ENCODE measurements at regions of chr19 and their contacts with region 1.

Region 1: DNA sequence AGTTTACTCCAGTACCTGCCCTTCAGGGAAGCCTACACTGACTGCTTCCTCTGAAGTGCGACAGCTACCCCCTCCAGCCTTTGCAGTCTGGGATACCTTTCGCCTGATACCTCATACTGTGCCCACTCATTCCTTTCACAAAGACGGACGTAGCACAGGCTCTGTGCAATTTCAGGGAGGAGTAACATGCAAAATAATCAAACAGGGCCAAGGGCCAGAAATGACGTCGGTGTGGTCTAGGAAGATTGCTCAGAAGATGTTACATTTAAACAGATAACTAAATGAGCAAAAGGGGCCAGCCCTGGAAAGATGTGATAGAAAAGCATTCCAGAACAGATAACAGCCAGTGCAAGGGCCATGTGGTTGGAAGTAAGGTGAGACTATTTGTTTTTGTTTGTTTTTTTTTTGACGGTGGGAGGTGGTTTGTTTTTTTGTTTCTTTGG is 6.6 kb upstream of the DDX39A start:
- DNase-seq: peak; percentile 91
- H3K4me3 ChIP-seq: no peak overlapping the region
- H3K27ac ChIP-seq: peak overlapping the region; percentile 48 to 65
- H3K4me1 ChIP-seq: peaks cover 3% of the 10 kb centered on the region
- H3K27me3 ChIP-seq: no peaks in the 10 kb centered on the region
- CTCF ChIP-seq: no peak
- POLR2A ChIP-seq: no peak

Region 2: DNA sequence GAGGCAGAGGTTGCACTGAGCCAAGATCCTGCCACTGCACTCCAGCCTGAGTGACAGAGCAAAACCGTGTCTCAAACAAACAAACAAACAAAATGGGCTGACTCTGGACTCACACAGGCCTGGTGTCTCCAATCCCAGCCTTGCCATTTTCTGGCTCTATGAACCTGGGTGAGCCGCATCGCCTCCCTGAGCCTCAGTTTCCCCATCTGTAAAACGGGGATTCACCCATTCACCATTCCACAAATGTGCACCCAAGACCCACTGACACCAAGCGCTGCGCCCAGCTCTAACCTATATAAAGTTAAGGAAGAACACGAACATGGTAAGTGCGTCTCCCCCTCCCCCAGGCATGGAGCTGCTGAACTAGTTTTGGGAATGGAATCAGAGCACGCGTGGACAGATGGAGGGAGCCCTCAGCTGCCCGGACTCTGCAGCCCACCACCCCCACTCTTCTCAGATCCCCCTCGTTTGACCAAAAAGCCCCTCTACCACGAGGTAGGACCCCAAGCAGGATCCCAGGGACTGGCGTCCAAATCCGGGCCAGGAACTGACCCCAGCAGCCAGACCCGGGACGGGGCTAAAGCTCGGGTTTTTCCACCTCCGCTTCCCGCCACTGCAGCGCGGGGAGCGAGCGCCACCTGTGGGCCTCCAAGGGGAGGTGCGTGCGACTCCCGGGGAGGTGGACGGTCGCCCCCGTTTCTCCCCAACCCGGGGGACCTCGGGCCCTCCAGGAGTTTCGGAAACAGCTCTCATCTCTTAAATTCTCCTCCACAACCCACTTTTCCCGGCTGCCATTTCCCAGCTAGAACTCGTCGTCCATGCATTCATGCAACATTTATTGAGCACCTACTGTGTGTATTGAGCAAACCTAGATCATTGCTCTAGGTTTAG is 77.5 kb before region 1 on chr19:
- intact Hi-C with region 1: no loop called
- DNase-seq: peak; percentile 69
- H3K4me3 ChIP-seq: peak overlapping the region; percentile 22 to 38
- H3K27ac ChIP-seq: no peak overlapping the region
- H3K4me1 ChIP-seq: no peaks in the 10 kb centered on the region
- H3K27me3 ChIP-seq: no peaks in the 10 kb centered on the region
- CTCF ChIP-seq: peak; percentile 71 to 97 (median 92)
- POLR2A ChIP-seq: no peak

Region 3: GRCh38 chr19:14472202-14472938 is 46.7 kb after region 1 on chr19:
- intact Hi-C with region 1: loop called (anchors 10 kb)
- DNase-seq: peak; percentile 79
- H3K4me3 ChIP-seq: peak overlapping the region; percentile 21 to 45
- H3K27ac ChIP-seq: no peak overlapping the region
- H3K4me1 ChIP-seq: peaks cover 6% of the 10 kb centered on the region
- H3K27me3 ChIP-seq: no peaks in the 10 kb centered on the region
- CTCF ChIP-seq: peak; percentile 83 to 100 (median 95)
- POLR2A ChIP-seq: no peak